PC-3 (cell line): ENCODE measurements at regions of chr11 and their contacts with region 1.

Region 1: GRCh38 chr11:1153951-1154493 is 3.7 kb upstream of the MUC5AC start:
- DNase-seq: peak; percentile 89
- ATAC-seq: peak; percentile 73
- H3K4me3 ChIP-seq: no peak overlapping the region
- H3K27ac ChIP-seq: peak overlapping the region; percentile 99
- H3K4me1 ChIP-seq: peaks cover 43% of the 10 kb centered on the region
- H3K27me3 ChIP-seq: no peaks in the 10 kb centered on the region
- CTCF ChIP-seq: no peak

Region 2: GRCh38 chr11:1060824-1061616 is 93.0 kb before region 1 on chr11:
- CTCF ChIA-PET with region 1: no interaction called
- POLR2A ChIA-PET with region 1: no interaction called
- intact Hi-C with region 1: loop called (anchors 2 kb)
- DNase-seq: peak; percentile 98
- ATAC-seq: peak; percentile 95
- H3K4me3 ChIP-seq: no peak overlapping the region
- H3K27ac ChIP-seq: peak overlapping the region; percentile 100
- H3K4me1 ChIP-seq: peaks cover 19% of the 10 kb centered on the region
- H3K27me3 ChIP-seq: no peaks in the 10 kb centered on the region
- CTCF ChIP-seq: no peak

Region 3: DNA sequence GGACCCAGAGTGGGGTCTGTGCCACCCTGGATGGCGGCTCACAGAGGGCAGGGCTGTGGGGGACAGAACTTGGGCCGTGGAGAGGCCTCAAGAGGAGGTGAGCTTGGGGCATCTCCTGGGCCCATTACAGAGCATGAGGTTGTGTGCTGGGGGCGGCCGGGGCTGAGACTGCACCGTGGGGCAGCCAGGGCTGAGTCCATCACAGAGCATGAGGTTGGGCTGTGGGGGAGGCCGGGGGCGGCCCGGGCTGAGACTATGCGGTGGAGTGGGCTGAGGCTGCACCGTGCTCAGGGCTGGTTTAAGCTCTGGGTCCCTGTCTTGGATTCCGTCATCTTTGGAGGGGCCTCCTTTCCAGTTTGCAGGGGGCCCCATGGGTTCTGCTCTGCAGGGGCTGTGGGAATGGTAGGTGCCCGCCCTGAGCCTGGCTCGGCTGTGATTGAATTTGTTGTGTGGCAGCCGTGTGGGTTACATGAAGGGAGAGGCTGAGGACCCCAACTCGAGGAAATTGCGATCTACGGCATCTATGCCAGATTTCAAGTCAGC is 34.3 kb before region 1 on chr11:
- CTCF ChIA-PET with region 1: no interaction called
- POLR2A ChIA-PET with region 1: no interaction called
- intact Hi-C with region 1: loop called (anchors 2 kb)
- DNase-seq: no peak
- ATAC-seq: no peak
- H3K4me3 ChIP-seq: no peak overlapping the region
- H3K27ac ChIP-seq: no peak overlapping the region
- H3K4me1 ChIP-seq: no peaks in the 10 kb centered on the region
- H3K27me3 ChIP-seq: no peaks in the 10 kb centered on the region
- CTCF ChIP-seq: no peak

Region 4: GRCh38 chr11:1226986-1227545 is 73.0 kb after region 1 on chr11:
- CTCF ChIA-PET with region 1: no interaction called
- POLR2A ChIA-PET with region 1: interaction called, 4 read pairs
- intact Hi-C with region 1: loop called (anchors 5 kb)
- DNase-seq: no peak
- ATAC-seq: no peak
- H3K4me3 ChIP-seq: no peak overlapping the region
- H3K27ac ChIP-seq: no peak overlapping the region
- H3K4me1 ChIP-seq: peaks cover 16% of the 10 kb centered on the region; the same call in 1 of the 2 replicates
- H3K27me3 ChIP-seq: no peaks in the 10 kb centered on the region
- CTCF ChIP-seq: no peak

Region 5: GRCh38 chr11:1326435-1327063 is 172.5 kb after region 1 on chr11:
- CTCF ChIA-PET with region 1: no interaction called
- POLR2A ChIA-PET with region 1: no interaction called
- intact Hi-C with region 1: no loop called
- DNase-seq: no peak
- ATAC-seq: peak; percentile 45
- H3K4me3 ChIP-seq: no peak overlapping the region
- H3K27ac ChIP-seq: no peak overlapping the region
- H3K4me1 ChIP-seq: no peaks in the 10 kb centered on the region
- H3K27me3 ChIP-seq: no peaks in the 10 kb centered on the region
- CTCF ChIP-seq: no peak